ENCODE measurements at regions of chr3 and their contacts with region 1.

Region 1: DNA sequence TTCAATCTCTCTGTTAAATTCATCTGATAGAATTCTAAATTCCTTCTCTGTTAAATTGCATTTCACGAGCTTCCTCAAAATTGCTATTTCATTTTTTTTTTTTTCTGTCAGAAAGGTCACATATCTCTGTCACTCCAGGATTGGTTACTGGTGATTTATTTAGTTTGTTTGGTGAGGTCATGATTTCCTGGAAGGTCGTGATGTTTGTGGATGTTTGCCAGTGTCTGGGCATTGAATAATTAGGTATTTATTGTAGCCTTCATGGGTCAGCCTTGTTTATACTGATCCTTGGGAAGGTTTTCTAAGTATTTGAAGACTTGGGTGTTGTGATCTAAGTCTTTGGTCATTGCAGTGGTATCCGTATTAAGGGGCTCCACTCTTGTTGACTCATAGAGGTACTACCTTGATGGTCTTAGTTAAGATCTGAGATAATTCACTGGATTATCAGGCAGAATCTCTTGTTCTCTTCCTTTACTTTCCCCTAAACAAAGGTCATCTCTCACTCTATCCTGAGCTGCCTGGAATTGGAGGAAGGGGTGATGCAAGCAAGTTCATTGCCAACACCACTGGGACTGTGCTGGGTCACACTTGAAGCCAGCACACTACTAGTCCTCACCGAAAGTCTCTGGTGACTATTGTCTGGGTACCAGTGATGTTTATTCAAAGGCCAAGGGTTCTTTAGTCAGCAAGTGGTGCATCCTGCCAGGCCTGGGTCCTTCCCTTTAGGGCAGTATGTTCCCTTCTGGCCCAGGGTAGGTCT is 231.1 kb downstream of the GBE1 start:
- DNase-seq: no peak
- H3K4me3 ChIP-seq: no peak overlapping the region
- H3K27me3 ChIP-seq: no peaks in the 10 kb centered on the region
- CTCF ChIP-seq: no peak

Region 2: DNA sequence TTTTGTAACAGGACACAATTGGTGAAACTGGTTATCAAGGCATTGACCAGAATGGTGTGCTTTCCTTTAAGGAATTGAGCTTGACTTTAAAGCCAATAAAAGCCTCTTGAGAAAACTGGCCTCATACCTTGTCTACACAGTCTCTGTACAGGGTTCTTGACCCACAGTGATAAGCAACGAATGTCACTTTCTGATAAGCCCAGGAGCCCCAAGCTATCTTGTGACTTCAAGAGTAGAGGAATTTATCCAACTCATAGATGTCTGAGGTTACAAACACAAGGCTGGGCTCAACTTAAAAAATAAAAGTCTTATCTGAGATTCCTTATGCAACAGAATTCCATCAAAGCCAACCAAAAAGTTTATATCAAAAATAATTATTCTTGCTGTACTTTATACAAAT is 19.0 kb after region 1 on chr3:
- CTCF ChIA-PET with region 1: no interaction called
- POLR2A ChIA-PET with region 1: interaction called, 10 read pairs
- DNase-seq: no peak
- H3K4me3 ChIP-seq: no peak overlapping the region
- H3K27me3 ChIP-seq: no peaks in the 10 kb centered on the region
- CTCF ChIP-seq: no peak

Region 3: DNA sequence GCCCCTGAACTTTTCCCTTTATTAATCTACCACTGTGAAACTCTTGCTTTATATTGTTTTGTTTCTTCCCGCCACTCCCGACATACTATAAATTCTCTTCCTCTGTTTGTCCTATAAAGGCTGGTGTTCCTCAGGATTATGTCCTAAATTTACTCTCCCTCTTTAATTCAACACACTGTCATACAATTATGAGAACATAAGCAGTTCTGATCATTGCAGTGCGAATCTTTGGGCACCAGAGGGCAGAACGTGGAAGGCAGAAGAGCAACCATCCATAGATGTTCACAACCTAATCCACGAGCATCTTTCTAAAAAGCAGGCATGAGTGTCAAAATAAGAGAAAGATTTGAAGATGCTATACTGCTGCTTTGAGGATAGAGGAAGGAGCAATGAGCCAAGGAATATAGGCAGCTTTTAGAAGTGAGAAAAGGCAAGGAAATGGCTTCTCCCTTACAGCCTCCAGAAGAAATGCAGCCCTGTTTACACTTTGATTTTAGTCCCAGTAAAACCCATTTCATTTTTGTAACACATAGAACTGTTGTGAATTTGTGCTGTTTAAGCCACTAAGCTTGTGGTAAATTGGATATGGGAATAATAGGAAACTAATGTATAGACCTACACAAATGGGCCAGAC is 51.7 kb after region 1 on chr3:
- CTCF ChIA-PET with region 1: no interaction called
- POLR2A ChIA-PET with region 1: no interaction called
- DNase-seq: no peak
- H3K4me3 ChIP-seq: no peak overlapping the region
- H3K27me3 ChIP-seq: no peaks in the 10 kb centered on the region
- CTCF ChIP-seq: peak; percentile 80